ENCODE measurements at regions of chr7 and their contacts with region 1.

Region 1: DNA sequence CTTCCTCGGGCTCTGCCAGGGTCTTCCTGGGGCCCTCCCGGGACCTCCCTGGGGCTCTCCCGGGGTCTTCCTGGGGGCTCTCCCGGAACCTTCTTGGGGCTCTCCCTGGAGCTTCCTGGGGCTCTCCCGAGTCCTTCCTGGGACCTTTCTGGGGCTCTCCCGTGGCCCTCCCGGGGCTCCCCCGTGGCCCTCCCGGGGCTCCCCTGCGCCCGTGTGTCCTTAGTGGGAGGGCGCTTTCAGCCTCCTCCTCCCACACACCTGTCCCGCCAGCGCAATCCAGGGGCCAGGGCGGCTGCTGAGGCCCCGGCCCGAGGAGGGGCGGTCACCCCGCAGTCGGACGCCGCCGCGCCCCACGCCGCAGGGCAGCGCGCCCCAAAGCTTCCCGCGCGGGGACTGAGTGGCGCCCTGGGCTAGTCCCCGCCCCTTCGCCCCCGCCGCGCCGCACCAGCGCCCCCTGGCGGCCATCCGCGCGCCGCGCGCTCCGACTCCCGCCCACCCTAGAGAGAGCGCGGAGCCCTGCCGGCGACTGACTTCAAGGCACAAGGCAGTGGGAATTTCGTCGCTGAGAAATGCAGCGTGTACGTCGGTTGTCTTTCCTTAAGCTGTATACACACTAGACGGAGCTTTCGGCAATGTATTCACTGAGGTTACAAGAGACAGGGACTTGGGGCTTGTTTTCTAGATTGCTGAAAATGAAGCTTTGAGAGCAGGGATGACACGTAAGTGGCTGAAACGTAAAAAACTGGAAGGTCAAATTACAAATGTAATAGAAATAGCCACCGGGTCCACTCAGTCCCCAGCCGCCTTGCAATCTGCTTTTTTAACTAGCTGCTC is 47.1 kb downstream of the INSIG1 start:
- DNase-seq: peak; percentile 26
- H3K4me3 ChIP-seq: peak overlapping the region; percentile 43
- H3K27ac ChIP-seq: no peak overlapping the region
- H3K27me3 ChIP-seq: no peaks in the 10 kb centered on the region
- CTCF ChIP-seq: peak; percentile 64

Region 2: GRCh38 chr7:154927624-154928143 is 417.1 kb before region 1 on chr7:
- CTCF ChIA-PET with region 1: interaction called, 98 read pairs
- POLR2A ChIA-PET with region 1: no interaction called
- DNase-seq: peak; percentile 76
- H3K4me3 ChIP-seq: peak overlapping the region; percentile 73
- H3K27ac ChIP-seq: peak overlapping the region; percentile 47
- H3K27me3 ChIP-seq: no peaks in the 10 kb centered on the region
- CTCF ChIP-seq: peak; percentile 71

Region 3: DNA sequence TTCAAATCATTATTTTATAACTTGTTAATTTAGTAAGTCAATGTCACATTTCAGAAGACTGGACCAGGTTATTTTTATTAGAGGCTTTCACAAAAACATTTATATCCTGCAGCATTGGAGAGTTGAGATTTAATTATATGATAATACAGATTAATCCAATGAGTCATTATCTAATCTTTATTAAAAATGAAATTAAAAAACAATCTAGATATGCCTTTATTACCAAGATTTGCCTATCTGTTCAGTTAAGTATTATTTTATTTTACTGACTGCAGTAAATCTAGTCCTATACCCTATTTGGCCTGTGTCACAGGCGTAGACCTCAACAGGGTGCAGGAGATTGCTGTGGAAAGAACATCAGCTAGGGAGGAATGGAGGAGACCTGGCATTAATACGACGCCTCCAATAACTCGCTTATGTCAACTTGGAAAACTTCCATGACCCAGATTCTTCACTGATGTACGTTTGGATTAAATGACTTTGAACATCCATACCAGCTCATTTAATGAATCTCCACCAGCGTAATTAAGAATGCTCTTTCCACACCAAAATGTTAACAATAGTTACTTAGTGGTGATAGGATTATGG is 360.1 kb before region 1 on chr7:
- CTCF ChIA-PET with region 1: interaction called, 12 read pairs
- POLR2A ChIA-PET with region 1: no interaction called
- DNase-seq: no peak
- H3K4me3 ChIP-seq: no peak overlapping the region
- H3K27ac ChIP-seq: no peak overlapping the region
- H3K27me3 ChIP-seq: no peaks in the 10 kb centered on the region
- CTCF ChIP-seq: no peak

Region 4: GRCh38 chr7:155190688-155191087 is 154.1 kb before region 1 on chr7:
- CTCF ChIA-PET with region 1: interaction called, 66 read pairs
- POLR2A ChIA-PET with region 1: no interaction called
- DNase-seq: no peak
- H3K4me3 ChIP-seq: 0 out of 2 replicates have a peak overlapping the region, but pooled peaks have one; percentile 13
- H3K27ac ChIP-seq: no peak overlapping the region
- H3K27me3 ChIP-seq: peaks cover 2% of the 10 kb centered on the region
- CTCF ChIP-seq: peak; percentile 87

Region 5: DNA sequence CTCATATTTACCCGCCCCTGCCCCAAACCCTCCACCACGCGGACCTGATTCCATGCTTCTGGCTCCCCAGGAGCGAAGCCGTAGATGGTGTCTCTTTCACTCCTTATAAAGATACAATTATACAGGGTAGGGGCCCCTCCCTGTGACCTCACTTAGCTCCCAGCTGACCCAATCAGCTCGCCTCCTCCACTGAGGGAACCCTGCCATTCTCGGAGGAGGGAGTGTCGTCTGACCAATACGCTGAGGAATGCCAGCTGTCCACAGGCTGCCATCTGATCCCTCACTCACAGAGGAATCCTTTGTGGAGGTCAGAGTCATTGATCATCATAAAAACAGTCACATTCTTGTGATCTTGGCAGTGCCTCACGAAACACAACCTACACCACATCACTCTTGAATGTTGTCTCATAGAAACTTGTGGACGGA is 114.6 kb before region 1 on chr7:
- CTCF ChIA-PET with region 1: no interaction called
- POLR2A ChIA-PET with region 1: no interaction called
- DNase-seq: peak; percentile 94
- H3K4me3 ChIP-seq: no peak overlapping the region
- H3K27ac ChIP-seq: peak overlapping the region; percentile 73
- H3K27me3 ChIP-seq: no peaks in the 10 kb centered on the region
- CTCF ChIP-seq: no peak

Region 6: GRCh38 chr7:155257482-155258225 is 87.2 kb before region 1 on chr7:
- CTCF ChIA-PET with region 1: no interaction called
- POLR2A ChIA-PET with region 1: no interaction called
- DNase-seq: no peak
- H3K4me3 ChIP-seq: no peak overlapping the region
- H3K27ac ChIP-seq: no peak overlapping the region
- H3K27me3 ChIP-seq: no peaks in the 10 kb centered on the region
- CTCF ChIP-seq: no peak

Region 7: GRCh38 chr7:155298834-155299534 is 45.8 kb before region 1 on chr7:
- CTCF ChIA-PET with region 1: interaction called, 48 read pairs
- POLR2A ChIA-PET with region 1: no interaction called
- DNase-seq: peak; percentile 88
- H3K4me3 ChIP-seq: peak overlapping the region; percentile 73
- H3K27ac ChIP-seq: peak overlapping the region; percentile 80
- H3K27me3 ChIP-seq: no peaks in the 10 kb centered on the region
- CTCF ChIP-seq: no peak

Measured in AG04450 (cell line).